Gastrocnemius medialis (tissue), 4 donors: ENCODE measurements at regions of chr15 and their contacts with region 1.

Region 1: DNA sequence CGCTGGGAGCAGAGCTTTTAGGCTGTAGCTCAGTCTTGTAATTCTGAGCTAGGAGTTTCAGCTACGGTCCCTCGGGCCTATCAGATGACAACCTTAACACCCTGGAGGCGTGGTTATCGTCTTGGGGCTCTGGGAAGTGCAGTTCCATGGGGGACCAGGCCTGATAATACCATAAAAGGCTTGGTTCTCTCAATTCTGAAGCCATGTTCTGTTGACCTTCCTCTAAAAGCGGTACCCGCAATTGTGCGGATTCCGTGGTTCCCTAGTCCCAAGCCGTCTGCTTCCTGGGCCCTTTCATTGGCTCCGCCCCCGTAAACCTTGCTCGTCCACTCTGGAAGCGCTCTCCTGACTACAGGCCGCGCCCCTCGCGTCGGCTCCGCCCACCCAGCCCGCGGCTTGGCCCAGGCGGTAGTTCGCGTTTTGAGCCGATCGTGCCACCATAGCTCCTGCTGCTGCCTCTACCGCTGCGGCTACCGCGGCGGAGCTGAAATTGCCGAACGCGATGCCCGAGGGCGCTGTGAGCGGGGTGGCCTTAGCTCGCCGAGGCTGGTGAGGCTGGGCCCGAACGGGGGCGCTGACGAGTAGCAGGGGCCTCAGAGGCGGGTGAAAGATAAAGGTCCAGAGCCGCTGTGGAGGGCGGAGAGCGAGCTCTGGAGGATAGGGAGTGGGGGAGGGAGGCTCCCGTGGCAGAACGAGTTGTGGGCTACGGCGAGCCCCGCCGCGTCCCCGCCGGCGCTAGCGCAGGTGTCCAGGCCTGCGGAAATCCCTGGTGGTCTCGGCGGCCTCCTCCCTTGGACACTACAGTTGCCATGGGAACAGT is at the start of gene MAPKBP1:
- DNase-seq: peak; percentile 94 to 97
- ATAC-seq: peak; percentile 96 to 98
- H3K4me3 ChIP-seq: peak within 1 kb of the TSS; percentile 71 to 91 (median 83)
- H3K27ac ChIP-seq: peak within 1 kb of the TSS; percentile 83 to 87 (median 86)
- H3K4me1 ChIP-seq: peaks cover 28 to 36% of the 10 kb centered on the region in 2 donors
- H3K27me3 ChIP-seq: no peaks in the 10 kb centered on the region
- CTCF ChIP-seq: peak; percentile 38 to 76 (median 60)
- POLR2A ChIP-seq: peak; percentile 49 to 51
- total RNA-seq, gene MAPKBP1: 4.2 to 8.4 (median 5.4) TPM

Region 2: GRCh38 chr15:41367418-41367817 is 406.9 kb before region 1 on chr15:
- in situ Hi-C with region 1: no loop called
- intact Hi-C with region 1: no loop called
- DNase-seq: peak; percentile 5 to 21
- ATAC-seq: peak; percentile 65 to 71
- H3K4me3 ChIP-seq: no peak overlapping the region
- H3K27ac ChIP-seq: peak overlapping the region in 1 of 4 donors; percentile 61
- H3K4me1 ChIP-seq: peaks cover 12 to 16% of the 10 kb centered on the region in 2 donors
- H3K27me3 ChIP-seq: no peaks in the 10 kb centered on the region
- CTCF ChIP-seq: no peak
- POLR2A ChIP-seq: no peak

Region 3: DNA sequence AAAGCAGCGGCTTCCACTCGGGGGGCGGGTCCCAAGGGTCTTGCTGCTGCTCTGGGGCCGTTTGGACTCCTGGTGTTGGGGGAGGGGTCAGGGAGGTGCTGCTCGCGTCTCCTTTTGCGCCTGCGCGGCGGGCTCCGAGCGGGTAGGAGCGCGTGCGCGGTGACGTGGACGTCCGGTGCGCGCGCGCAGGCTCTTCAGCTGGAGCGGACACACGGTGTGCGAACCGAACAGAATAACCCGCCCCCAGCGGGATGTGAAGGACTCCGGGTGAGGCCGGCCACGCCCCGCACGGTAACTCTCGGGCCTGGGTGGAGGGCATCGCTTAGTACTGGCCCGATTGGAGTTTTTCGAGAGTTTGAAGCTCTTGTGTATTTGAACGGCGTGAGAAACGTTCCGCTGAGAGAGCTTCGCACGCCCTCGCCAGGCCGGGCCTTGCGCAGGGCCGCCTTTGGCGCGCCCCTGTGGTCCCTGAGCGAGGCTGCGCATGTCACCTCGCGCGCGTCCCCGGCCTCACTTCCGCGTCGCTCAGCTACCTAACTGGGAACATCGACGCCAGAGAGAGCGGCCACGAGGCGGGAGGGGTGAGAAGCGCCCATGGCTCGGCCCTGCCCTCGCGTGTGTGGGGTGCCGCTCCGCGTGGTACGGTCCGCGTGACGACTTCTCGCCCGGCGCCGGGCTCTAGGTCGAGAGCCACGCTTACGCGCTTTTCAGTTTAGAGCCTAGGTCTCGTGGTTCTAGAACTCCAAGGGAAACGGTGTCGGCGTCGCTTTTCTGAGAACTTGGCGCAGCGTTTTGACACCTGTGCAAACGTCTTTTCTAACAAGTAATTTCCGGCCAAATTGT is 113.8 kb before region 1 on chr15 and contains the start of gene MGA:
- in situ Hi-C with region 1: no loop called
- intact Hi-C with region 1: loop called (anchors 5 kb)
- DNase-seq: peak; percentile 73 to 79
- ATAC-seq: peak; percentile 79 to 81
- H3K4me3 ChIP-seq: peak within 1 kb of the TSS; percentile 52 to 88 (median 70)
- H3K27ac ChIP-seq: peak within 1 kb of the TSS; percentile 70 to 83 (median 80)
- H3K4me1 ChIP-seq: peaks cover 38 to 40% of the 10 kb centered on the region in 2 donors
- H3K27me3 ChIP-seq: no peaks in the 10 kb centered on the region
- CTCF ChIP-seq: peak in 2 of 5 experiments; percentile 10 to 13
- POLR2A ChIP-seq: peak; percentile 38 to 71
- total RNA-seq, gene MGA: 17.0 to 27.8 (median 23.6) TPM

Region 4: GRCh38 chr15:41811432-41812195 is 37.3 kb after region 1 on chr15:
- in situ Hi-C with region 1: loop called (anchors 5 kb)
- intact Hi-C with region 1: loop called (anchors 1 kb)
- DNase-seq: peak; percentile 67 to 80
- ATAC-seq: peak; percentile 94 to 97
- H3K4me3 ChIP-seq: no peak overlapping the region
- H3K27ac ChIP-seq: no peak overlapping the region
- H3K4me1 ChIP-seq: no peaks in the 10 kb centered on the region
- H3K27me3 ChIP-seq: no peaks in the 10 kb centered on the region
- CTCF ChIP-seq: peak; percentile 87 to 93 (median 93)
- POLR2A ChIP-seq: no peak

Region 5: GRCh38 chr15:41904541-41905005 is 130.3 kb after region 1 on chr15:
- in situ Hi-C with region 1: no loop called
- intact Hi-C with region 1: loop called (anchors 2 kb)
- DNase-seq: peak in 1 of 2 donors; percentile 42
- ATAC-seq: peak; percentile 46 to 75
- H3K4me3 ChIP-seq: no peak overlapping the region
- H3K27ac ChIP-seq: peak overlapping the region in 2 of 4 donors; percentile 36 to 41
- H3K4me1 ChIP-seq: peaks cover 7 to 11% of the 10 kb centered on the region in 2 donors
- H3K27me3 ChIP-seq: no peaks in the 10 kb centered on the region
- CTCF ChIP-seq: peak; percentile 53 to 79 (median 66)
- POLR2A ChIP-seq: no peak

Region 6: DNA sequence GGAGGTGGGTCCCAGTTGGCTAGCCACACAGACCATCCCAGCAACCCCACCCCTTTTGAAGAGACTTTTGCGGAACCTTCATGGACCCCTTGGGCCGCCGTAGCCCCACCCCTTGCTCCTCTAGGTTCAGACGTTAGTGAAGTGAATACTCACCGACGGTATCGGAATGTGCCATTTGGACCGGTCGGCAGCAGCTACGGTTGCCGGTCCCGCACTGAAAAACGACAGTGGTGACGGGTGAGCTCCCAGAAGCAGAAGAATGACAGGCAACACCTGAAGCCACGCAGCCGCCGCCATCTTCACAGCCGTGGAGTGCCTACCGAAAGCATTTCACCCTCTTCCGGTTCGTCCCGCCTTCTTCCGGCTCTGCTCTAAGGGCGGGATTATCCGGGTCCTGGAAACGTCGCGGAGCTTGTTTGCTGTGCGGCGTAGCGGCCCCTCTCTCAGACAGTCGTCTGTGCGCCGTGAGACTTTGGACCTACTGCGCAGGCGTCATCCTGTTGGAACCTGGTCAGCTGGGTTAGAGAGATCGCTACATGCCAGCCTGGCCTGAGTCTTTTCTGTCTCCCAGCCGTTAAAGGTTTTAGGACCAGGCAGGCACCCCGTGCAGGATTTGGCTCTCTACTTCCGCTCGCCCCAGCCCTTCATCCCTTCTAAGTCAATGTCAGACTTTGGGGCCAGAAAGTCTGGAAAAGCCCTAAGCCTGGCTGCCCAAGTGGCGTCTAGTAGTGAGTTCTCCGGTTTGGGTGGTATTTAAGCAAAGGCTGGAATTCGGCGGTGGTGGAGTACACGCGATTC is 499.0 kb after region 1 on chr15 and contains the starts of genes GANC and TMEM87A:
- in situ Hi-C with region 1: no loop called
- intact Hi-C with region 1: loop called (anchors 5 kb)
- DNase-seq: peak; percentile 98
- ATAC-seq: peak; percentile 92
- H3K4me3 ChIP-seq: peak within 1 kb of the TSS; percentile 80 to 86 (median 84)
- H3K27ac ChIP-seq: peak within 1 kb of the TSS; percentile 94 to 98 (median 98)
- H3K4me1 ChIP-seq: peaks cover 46 to 50% of the 10 kb centered on the region in 2 donors
- H3K27me3 ChIP-seq: no peaks in the 10 kb centered on the region
- CTCF ChIP-seq: peak in 1 of 5 experiments; percentile 4
- POLR2A ChIP-seq: peak; percentile 81 to 84
- total RNA-seq, gene GANC: 5.9 to 26.3 (median 11.9) TPM
- total RNA-seq, gene TMEM87A: 29.4 to 67.6 (median 37.4) TPM